ENCODE measurements at regions of chr4 and their contacts with region 1.

Region 1: GRCh38 chr4:153541456-153542096 is 75.4 kb downstream of the TMEM131L start:
- DNase-seq: no peak
- H3K4me3 ChIP-seq: no peak overlapping the region
- CTCF ChIP-seq: no peak
- POLR2A ChIP-seq: no peak

Region 2: DNA sequence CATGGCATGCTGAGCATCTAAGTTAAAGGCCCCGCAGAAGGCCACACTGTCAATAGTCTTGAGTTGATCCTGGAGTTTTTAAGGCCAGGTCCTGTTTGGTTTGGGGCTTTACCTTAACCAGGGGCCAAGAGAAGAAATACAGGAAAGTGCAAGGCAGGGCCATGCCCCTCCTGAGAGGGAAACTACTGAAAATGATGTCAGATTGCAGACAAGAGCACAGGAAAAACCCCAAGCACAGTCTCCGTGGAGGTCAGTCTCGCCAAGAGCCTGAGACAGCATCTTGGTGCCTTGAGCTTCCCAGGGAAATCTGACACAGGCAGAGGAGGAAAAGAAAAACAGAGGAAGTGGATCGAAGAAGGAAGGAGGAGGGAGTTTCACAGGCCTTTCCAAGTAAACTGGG is 1748.6 kb before region 1 on chr4:
- intact Hi-C with region 1: no loop called
- DNase-seq: no peak
- H3K4me3 ChIP-seq: no peak overlapping the region
- CTCF ChIP-seq: no peak
- POLR2A ChIP-seq: no peak

Region 3: GRCh38 chr4:153564630-153565525 is 23.3 kb after region 1 on chr4:
- intact Hi-C with region 1: loop called (anchors 2 kb)
- DNase-seq: no peak
- H3K4me3 ChIP-seq: no peak overlapping the region
- CTCF ChIP-seq: no peak
- POLR2A ChIP-seq: no peak